Common myeloid progenitor, CD34-positive (primary cell): ENCODE measurements at regions of chr7 and their contacts with region 1.

Region 1: DNA sequence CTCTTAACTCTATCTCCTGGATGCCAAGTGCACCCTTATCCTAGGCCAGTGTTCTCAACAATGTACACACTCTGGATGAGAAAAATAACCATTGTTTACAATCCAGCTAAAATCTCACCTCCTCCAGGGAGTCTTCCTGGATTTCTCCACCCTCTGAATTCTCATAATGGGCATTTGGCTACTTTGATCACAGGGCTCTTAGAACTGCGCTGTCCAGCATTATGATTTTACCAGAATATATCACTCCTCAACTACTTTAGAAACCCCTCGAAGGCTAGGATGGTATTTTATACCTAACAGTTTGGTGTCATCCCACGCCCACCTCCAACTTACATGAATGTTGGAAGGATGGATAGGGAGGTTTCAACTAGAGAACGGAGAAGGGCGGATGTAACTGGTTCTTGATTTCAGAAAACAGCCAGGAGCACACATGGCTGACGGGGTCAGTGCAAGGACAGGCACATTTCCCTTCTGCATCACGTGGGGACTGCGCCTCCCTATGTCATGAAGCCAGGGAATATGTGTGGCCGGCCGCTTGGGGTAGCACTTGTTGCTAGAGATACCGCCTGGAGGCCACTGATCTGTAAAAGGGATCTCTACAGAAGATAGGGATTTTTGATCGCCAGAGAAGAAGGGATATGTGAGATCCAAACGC is 1.2 kb upstream of the ATP6V0E2 start:
- DNase-seq: peak; percentile 53 to 70 (median 54)
- H3K4me3 ChIP-seq: peak overlapping the region in 6 of 7 experiments; percentile 65 to 77 (median 71)
- H3K27ac ChIP-seq: no peak overlapping the region
- H3K4me1 ChIP-seq: peaks cover 10 to 68% (median 58%) of the 10 kb centered on the region in 4 experiments
- H3K27me3 ChIP-seq: no peaks in the 10 kb centered on the region

Region 2: GRCh38 chr7:149883452-149883861 is 10.9 kb after region 1 on chr7:
- CTCF ChIA-PET with region 1: interaction called, 24 read pairs
- POLR2A ChIA-PET with region 1: interaction called, 3 read pairs
- DNase-seq: peak; percentile 65 to 77 (median 74)
- H3K4me3 ChIP-seq: no peak overlapping the region
- H3K27ac ChIP-seq: no peak overlapping the region
- H3K4me1 ChIP-seq: peaks cover 0 to 18% (median 9%) of the 10 kb centered on the region in 4 experiments
- H3K27me3 ChIP-seq: no peaks in the 10 kb centered on the region